Heart left ventricle (tissue), 16 donors: ENCODE measurements at regions of chr5 and their contacts with region 1.

Region 1: DNA sequence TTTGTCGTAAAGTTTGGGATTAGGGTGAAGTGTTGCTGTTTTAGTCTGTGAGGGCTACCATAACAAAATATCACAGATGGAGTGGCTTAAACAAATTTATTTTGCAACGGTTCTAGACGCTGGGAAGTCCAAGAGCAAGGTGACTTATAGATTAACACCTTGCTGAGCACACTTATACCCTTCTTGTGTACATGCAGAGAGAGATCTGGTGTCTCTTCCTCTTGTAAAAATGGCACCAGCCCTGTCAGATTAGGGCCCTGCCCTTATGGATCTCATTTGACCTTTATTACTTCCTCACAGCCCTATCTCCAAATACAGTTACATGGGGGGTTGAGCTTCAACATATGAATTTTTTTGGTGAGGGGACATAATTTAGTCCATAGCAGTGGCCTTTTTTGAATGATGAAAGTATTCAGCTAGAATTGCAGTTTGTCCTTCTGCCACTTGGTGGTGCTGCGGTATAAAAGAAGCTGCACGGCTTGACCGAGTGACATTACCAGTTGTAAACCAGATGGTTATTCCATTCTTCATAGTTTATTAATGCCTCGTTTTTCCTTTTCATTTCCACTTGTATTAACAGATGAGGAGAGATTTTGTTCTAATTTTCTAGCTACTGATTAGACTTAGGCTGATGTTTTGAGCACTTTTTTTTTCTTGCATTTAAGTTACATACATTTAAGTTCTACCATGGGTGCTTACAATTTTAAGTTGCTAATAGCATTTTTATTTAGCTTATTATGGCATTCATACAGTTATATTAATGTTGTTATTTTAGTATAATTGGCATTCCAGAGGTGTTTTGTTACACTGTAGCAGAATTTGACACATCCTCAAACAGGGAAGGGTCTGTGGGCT is 19.4 kb downstream of the DCP2 start:
- DNase-seq: peak in 4 of 5 donors; percentile 55 to 69 (median 62)
- ATAC-seq: peak in 3 of 4 donors; percentile 69 to 84 (median 84)
- H3K4me3 ChIP-seq: no peak overlapping the region
- H3K27ac ChIP-seq: no peak overlapping the region
- H3K4me1 ChIP-seq: peaks cover 0 to 14% (median 5%) of the 10 kb centered on the region in 12 donors
- H3K27me3 ChIP-seq: no peaks in the 10 kb centered on the region
- CTCF ChIP-seq: peak; percentile 84 to 96 (median 92)
- POLR2A ChIP-seq: no peak

Region 2: GRCh38 chr5:112860929-112861637 is 134.9 kb before region 1 on chr5 and contains the start of gene SRP19:
- intact Hi-C with region 1: no loop called
- DNase-seq: peak; percentile 95 to 97 (median 96)
- ATAC-seq: peak; percentile 95 to 98 (median 96)
- H3K4me3 ChIP-seq: peak within 1 kb of the TSS; percentile 71 to 98 (median 84)
- H3K27ac ChIP-seq: peak within 1 kb of the TSS; percentile 63 to 89 (median 82)
- H3K4me1 ChIP-seq: peaks cover 0 to 35% (median 26%) of the 10 kb centered on the region in 12 donors
- H3K27me3 ChIP-seq: no peaks in the 10 kb centered on the region
- CTCF ChIP-seq: no peak
- POLR2A ChIP-seq: peak in 1 of 2 donors; percentile 78
- total RNA-seq, gene SRP19: 23.6 to 45.7 (median 28.2) TPM

Region 3: DNA sequence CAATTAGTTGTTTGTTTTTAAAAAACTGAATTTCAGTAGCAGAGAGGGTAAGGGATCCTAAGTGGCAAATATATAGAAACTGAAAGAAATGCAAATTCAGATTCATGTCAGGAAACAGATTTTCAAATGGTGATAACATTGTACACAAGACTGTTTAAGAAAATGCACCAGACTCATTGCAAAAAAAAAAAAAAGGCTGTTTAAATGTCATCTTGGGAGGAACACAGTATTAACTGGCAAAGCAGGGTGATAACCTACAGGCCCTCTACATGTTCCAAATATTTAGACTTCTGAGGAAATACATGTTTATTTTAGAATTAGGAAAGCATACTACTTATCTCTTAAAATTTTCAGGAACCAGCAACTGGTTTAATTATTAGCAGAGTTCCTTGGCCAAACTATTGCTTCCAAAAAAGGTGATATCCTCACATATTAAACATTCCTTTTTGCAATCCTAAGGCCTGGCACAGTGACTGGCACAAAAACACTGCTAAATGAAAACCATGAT is 324.3 kb after region 1 on chr5:
- intact Hi-C with region 1: loop called in 1 of 10 experiments (anchors 5 kb)
- DNase-seq: no peak
- ATAC-seq: no peak
- H3K4me3 ChIP-seq: no peak overlapping the region
- H3K27ac ChIP-seq: peak overlapping the region in 1 of 12 donors; percentile 13
- H3K4me1 ChIP-seq: peaks cover 0 to 18% (median 5%) of the 10 kb centered on the region in 12 donors
- H3K27me3 ChIP-seq: no peaks in the 10 kb centered on the region
- CTCF ChIP-seq: no peak
- POLR2A ChIP-seq: no peak

Region 4: GRCh38 chr5:113513384-113514288 is 517.6 kb after region 1 on chr5 and contains the start of gene YTHDC2:
- intact Hi-C with region 1: loop called (anchors 5 to 10 kb)
- DNase-seq: peak; percentile 88 to 95 (median 91)
- ATAC-seq: peak; percentile 95 to 98 (median 98)
- H3K4me3 ChIP-seq: peak within 1 kb of the TSS; percentile 77 to 96 (median 82)
- H3K27ac ChIP-seq: peak within 1 kb of the TSS; percentile 70 to 97 (median 92)
- H3K4me1 ChIP-seq: peaks cover 0 to 37% (median 16%) of the 10 kb centered on the region in 12 donors
- H3K27me3 ChIP-seq: peaks cover 0 to 13% (median 0%) of the 10 kb centered on the region in 9 donors
- CTCF ChIP-seq: peak in 10 of 12 donors; percentile 8 to 58 (median 32)
- POLR2A ChIP-seq: peak in 1 of 2 donors; percentile 73
- total RNA-seq, gene YTHDC2: 9.4 to 19.8 (median 15.1) TPM

Region 5: DNA sequence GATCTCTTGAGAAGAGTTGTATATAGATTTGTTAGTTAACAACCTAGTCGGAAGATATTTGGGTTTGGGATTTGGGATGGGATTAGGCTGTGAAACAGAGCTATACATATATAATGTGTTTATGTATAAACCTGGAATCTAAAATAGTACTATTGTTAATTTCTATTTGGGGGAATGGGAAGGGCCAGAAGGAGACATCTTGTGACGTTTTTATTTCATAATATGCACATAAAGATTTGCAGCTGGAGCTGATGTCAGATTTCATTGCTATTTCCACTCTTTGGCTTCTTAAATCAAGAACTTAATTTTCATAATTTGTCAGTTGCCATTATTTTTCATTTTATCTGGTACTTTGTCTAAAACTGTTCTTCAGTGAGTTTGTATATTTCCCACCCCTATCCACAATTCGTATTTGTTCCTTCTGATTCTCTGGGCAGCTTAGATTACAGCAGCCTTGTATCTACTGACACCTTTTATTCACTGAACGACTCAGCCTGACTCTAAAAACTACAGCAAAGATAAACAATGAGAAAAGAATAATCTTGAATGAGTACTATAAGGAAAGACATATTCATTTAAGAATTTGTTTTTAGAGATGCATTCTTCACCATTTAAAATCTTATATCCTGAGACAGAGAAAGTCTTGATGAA is 604.4 kb after region 1 on chr5:
- intact Hi-C with region 1: loop called in 8 of 10 experiments (anchors 5 to 10 kb)
- DNase-seq: no peak
- ATAC-seq: no peak
- H3K4me3 ChIP-seq: no peak overlapping the region
- H3K27ac ChIP-seq: no peak overlapping the region
- H3K4me1 ChIP-seq: peaks cover 0 to 16% (median 0%) of the 10 kb centered on the region in 12 donors
- H3K27me3 ChIP-seq: no peaks in the 10 kb centered on the region
- CTCF ChIP-seq: no peak
- POLR2A ChIP-seq: no peak